Adrenal gland (tissue), 19 donors: ENCODE measurements at regions of chr10 and their contacts with region 1.

Region 1: DNA sequence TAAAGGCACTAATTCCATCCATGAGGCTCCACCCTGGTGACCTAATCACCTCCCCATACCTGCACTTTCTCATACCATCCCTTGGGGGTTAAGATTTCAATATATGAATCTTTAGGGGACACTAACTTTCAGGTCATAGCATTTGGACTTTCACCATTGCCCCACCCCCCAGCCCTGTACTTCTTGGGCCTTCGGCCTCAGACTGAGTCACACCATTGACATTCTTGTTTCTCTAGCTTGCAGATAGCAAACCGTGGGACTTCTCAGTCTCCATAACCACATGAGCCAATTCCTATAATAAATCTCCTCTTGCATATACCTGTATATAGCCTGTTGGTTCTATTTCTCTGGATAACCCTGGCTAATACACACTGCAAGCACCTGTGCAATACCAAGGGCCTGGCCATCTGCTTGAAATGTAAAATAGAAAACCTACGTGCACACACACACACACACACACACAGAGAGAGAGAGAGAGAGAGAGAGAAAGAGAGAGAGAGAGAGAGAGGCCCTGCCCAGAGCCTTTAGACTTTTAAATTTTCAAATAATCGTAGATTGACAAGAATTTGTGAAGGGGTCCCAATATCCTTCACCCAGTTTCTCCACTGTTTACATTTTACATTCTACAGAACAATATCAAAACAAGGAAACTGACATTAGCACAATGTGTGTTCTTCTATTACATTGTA is 25.3 kb downstream of the ANXA8 start:
- DNase-seq: peak in 3 of 7 donors; percentile 10 to 30 (median 11)
- H3K4me3 ChIP-seq: no peak overlapping the region
- H3K27ac ChIP-seq: no peak overlapping the region
- H3K4me1 ChIP-seq: no peaks in the 10 kb centered on the region
- H3K27me3 ChIP-seq: no peaks in the 10 kb centered on the region
- CTCF ChIP-seq: no peak
- POLR2A ChIP-seq: no peak

Region 2: DNA sequence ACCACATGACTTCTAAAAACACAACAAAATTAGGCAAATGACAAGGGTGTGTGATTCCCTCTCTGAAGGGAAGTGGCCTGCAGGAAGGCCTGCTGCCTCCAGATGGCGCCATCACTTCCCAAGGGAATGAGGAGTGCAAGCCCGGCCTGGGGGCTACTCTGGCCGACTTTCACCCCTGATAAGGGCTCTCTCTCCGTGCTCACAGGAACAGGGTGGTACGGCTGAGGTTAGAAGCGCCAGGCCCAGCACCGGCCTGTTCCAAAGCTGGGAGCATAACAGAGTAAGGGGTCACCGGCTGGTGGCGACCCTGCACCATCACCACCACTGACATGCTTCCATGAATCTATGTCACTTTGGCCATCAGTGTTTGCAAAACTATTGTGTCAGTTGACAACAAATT is 97.3 kb before region 1 on chr10:
- intact Hi-C with region 1: loop called in 1 of 2 experiments (anchors 10 kb)
- DNase-seq: peak; percentile 28 to 66 (median 46)
- H3K4me3 ChIP-seq: no peak overlapping the region
- H3K27ac ChIP-seq: no peak overlapping the region
- H3K4me1 ChIP-seq: no peaks in the 10 kb centered on the region
- H3K27me3 ChIP-seq: no peaks in the 10 kb centered on the region
- CTCF ChIP-seq: peak; percentile 52 to 82 (median 70)
- POLR2A ChIP-seq: no peak

Region 3: GRCh38 chr10:47402641-47403301 is 55.8 kb before region 1 on chr10:
- intact Hi-C with region 1: no loop called
- DNase-seq: peak; percentile 75 to 92 (median 86)
- H3K4me3 ChIP-seq: no peak overlapping the region
- H3K27ac ChIP-seq: peak overlapping the region in 2 of 5 donors; percentile 3 to 75
- H3K4me1 ChIP-seq: peaks cover 9 to 17% of the 10 kb centered on the region in 2 donors
- H3K27me3 ChIP-seq: no peaks in the 10 kb centered on the region
- CTCF ChIP-seq: no peak
- POLR2A ChIP-seq: no peak